ENCODE measurements at regions of chr7 and their contacts with region 1.

Region 1: DNA sequence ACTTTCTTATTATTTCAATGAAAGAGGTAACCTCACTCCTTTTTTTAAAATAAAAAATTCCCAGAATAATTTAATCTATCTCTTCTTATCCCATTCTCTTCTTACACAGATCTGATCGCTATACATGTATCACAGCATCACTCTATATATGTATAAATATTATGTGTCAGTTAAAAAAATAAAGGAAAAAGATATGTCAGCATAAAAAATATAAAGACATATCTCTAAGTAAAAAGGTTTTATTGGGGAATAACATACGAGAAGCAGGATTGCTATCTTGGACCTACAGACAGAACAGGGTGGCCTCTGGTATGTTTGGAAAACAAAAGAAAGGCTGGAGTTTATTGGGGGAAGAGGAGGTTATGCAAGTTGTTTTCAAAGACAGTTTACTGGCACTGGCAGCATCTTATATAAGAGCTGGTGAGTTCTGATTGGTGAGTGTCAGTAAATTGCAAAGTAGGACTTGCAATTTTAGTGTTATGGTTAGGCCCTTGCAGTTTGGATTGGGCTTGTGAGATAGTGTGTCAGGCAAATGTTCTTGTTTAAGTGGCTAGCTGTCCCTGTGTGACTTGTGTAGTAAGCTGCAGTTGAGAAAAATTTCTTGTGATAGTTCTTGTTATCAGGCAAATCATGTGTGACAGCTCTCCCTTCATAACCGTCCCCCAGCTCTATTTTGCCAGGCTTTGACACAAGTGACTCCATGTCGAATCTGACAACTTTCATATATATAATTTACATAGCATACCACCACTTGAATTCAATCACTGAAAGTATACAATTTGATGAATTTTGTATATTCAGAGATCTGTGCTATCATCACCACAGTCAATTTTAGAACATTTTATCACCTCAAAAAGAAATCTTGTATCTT is 118.2 kb downstream of the HBP1 start:
- DNase-seq: no peak
- ATAC-seq: peak; percentile 68

Region 2: DNA sequence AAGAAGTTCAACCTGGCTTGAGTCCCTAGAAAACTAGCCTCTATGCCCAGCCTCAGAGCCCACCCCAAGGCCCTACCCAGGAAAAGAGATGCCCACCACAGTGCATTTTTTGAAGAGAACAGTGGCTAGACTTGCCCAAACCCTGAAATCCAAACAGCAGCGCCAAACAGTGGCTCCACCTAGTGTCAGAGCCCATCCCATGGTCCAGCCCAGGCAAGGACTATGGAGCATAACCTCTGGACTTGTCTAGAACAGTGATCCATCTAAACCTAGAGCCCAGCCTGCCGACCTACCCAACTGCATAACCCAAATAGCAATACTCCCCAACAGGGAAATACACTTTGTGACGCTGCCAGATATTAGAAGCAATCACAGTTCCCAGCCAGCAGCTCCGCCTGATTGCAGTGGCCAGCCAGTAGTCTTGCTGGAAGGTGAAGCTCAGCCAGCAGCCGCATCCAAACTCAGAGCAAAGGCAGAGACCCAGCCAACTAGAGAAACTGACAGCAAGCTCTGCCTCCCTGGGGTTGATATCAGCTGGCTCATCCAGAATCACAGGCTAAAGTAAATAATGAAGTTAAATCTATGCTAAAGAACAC is 73.7 kb before region 1 on chr7:
- intact Hi-C with region 1: loop called (anchors 10 kb)
- DNase-seq: peak; percentile 75
- ATAC-seq: peak; percentile 84

Region 3: GRCh38 chr7:107471292-107472070 is 184.5 kb after region 1 on chr7:
- intact Hi-C with region 1: loop called (anchors 10 kb)
- DNase-seq: no peak
- ATAC-seq: peak; percentile 57

Measured in Right ventricle myocardium superior (tissue), 1 donor.